Ovary (tissue), 10 donors: ENCODE measurements at regions of chr15 and their contacts with region 1.

Region 1: GRCh38 chr15:74053941-74054529 is 28.3 kb downstream of the GOLGA6A start:
- DNase-seq: peak; percentile 78 to 85 (median 81)
- H3K4me3 ChIP-seq: no peak overlapping the region
- H3K27ac ChIP-seq: no peak overlapping the region
- H3K4me1 ChIP-seq: peaks cover 17% of the 10 kb centered on the region
- H3K27me3 ChIP-seq: no peaks in the 10 kb centered on the region
- CTCF ChIP-seq: peak in 2 of 3 donors; percentile 18 to 39
- EP300 ChIP-seq: no peak
- POLR2A ChIP-seq: no peak

Region 2: GRCh38 chr15:73985101-73985873 is 68.7 kb before region 1 on chr15:
- intact Hi-C with region 1: no loop called
- DNase-seq: no peak
- H3K4me3 ChIP-seq: no peak overlapping the region
- H3K27ac ChIP-seq: no peak overlapping the region
- H3K4me1 ChIP-seq: peaks cover 11% of the 10 kb centered on the region
- H3K27me3 ChIP-seq: no peaks in the 10 kb centered on the region
- CTCF ChIP-seq: no peak
- EP300 ChIP-seq: no peak
- POLR2A ChIP-seq: no peak

Region 3: DNA sequence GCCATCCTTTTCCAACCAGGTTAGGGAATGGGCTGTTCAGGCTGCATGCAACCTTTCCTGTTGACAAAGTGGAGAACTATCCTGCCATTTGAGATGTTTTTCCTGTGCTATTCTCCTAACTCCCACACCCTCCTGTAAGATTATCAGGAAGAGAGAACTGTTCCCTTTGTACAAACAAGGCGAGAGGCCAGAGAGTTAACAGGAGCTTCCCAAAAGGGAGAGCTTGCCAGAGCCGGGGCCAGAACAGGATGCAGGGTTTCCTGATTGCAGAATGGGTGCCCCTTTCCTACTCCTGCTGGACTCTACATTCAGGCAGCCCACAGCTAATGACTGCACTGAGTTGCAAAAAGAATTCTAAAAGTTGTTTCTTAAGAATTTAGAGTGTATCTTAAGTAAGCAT is 42.4 kb before region 1 on chr15:
- intact Hi-C with region 1: no loop called
- DNase-seq: peak; percentile 51 to 76 (median 59)
- H3K4me3 ChIP-seq: no peak overlapping the region
- H3K27ac ChIP-seq: no peak overlapping the region
- H3K4me1 ChIP-seq: peaks cover 11% of the 10 kb centered on the region
- H3K27me3 ChIP-seq: no peaks in the 10 kb centered on the region
- CTCF ChIP-seq: no peak
- EP300 ChIP-seq: no peak
- POLR2A ChIP-seq: no peak

Region 4: DNA sequence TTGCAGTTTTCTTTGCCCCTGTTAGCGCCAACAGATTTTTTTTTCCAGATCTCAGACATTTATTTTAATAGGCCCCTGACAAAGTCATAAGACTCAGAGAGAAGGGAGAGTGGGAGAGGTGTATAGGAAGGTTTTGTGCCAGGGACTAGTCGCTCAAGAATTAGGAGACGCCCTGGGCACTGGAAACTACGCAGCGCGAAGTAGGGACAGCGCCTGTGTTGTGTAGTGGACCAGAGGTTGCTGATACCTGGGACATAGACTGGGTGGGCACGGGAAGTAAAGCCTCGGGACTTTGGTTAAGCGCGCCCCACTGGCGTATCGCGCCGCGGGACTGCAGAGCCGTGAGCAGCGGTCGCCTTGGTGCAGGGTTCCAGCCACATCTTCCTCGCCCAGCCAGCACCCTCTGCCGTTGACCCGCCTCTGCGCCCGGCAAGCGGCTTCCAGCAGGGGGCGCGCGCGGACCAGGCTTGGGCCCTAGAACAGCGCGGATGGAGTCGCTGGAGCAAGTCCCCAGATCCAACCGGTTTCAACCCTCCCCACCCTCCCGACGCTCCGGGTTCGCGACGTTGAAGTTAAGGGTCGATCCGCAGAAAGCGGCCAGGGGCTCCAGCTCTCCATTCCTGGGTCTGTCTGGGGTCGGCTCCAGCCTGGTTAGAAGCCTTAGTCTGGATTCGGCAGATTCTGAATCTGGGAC is 73.4 kb after region 1 on chr15:
- intact Hi-C with region 1: loop called in 1 of 4 experiments (anchors 10 kb)
- DNase-seq: peak; percentile 84 to 94 (median 92)
- H3K4me3 ChIP-seq: peak overlapping the region; percentile 26
- H3K27ac ChIP-seq: no peak overlapping the region
- H3K4me1 ChIP-seq: peaks cover 8% of the 10 kb centered on the region
- H3K27me3 ChIP-seq: no peaks in the 10 kb centered on the region
- CTCF ChIP-seq: peak; percentile 93 to 99 (median 99)
- EP300 ChIP-seq: no peak
- POLR2A ChIP-seq: no peak